Lower leg skin (tissue), 4 donors: ENCODE measurements at regions of chr12 and their contacts with region 1.

Region 1: DNA sequence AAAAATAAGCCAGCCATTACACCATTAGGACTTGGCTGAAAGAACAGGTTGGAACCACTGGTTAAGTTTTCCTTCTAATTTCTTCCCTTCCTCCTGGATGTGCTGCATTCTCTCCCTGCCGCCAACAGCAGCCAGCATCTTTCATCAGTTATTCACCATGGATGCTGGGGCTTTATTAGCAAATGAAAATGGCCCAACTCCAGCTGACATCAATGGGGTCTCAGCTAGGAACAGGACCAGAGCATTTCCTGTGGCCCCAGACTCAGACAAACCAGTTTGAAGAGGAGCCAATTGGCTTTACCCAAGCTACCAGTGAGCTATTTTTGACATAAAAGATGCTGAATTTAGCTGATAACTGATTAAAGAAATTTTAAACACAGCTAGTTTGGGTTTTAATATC is 26.0 kb upstream of the TBX5 start:
- DNase-seq: no peak
- H3K4me3 ChIP-seq: no peak overlapping the region
- CTCF ChIP-seq: no peak
- POLR2A ChIP-seq: no peak

Region 2: GRCh38 chr12:113955109-113955970 is 476.6 kb before region 1 on chr12:
- intact Hi-C with region 1: no loop called
- DNase-seq: no peak
- H3K4me3 ChIP-seq: no peak overlapping the region
- CTCF ChIP-seq: no peak
- POLR2A ChIP-seq: no peak

Region 3: DNA sequence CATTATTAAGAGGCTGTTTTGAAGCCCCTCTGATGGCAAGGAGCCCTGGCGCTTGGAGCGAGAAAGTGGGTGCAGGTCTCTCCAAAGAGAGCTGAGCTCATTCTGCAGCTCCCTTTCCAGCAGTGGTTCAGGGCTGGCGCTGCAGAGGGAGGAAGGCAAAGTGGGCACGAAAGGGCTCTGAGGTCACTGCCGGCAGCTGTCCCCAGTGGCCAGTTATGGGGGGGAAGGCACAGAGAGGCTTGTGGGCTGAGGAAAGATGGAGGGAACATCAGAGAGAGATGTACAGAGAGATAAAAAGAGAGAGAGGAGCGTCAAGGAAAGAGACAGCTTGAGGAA is 49.3 kb after region 1 on chr12:
- intact Hi-C with region 1: loop called (anchors 2 kb)
- DNase-seq: no peak
- H3K4me3 ChIP-seq: no peak overlapping the region
- CTCF ChIP-seq: no peak
- POLR2A ChIP-seq: no peak